Heart left ventricle (tissue), 16 donors: ENCODE measurements at regions of chr16 and their contacts with region 1.

Region 1: DNA sequence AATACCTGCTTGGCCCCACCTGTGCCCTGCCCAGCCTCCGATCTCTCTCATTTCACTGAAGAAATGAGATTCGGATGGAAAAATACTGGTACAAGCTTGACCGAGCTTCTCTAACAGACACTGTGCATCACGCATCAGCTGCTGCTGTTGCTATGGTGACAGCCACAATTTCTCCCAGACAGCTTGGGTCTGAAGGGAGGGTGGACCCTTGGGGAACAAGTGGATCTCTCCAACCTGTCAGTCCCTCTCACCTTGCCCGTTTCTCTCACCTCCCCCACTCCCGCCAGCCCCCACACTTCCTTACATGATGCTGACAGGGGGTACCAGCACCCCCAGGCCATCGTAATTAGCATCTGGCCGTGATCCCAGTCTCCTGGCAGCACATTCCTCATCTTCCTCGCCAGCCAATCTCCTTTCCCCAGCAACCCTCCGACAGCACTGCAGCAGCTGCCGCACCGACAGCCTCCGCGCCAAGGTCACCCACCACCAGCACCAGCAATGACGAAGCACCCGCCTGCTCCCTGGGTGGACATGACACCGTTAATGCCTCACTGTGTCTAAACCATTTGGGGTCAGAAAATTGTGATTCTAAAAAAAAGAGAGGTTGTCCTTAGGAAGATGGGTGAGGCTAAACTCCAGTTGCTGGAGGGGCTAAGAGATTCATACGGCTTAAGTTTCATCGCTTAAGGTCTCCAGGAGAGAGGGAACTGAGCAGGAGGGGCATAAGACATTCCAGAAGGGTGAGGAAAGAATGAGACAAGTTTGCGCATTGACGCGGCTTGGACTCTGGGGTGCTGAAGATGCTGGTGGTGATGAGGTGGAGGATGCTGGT is 58.6 kb upstream of the TNRC6A start:
- DNase-seq: peak; percentile 58 to 85 (median 77)
- ATAC-seq: peak; percentile 74 to 80 (median 76)
- H3K4me3 ChIP-seq: peak overlapping the region in 2 of 12 donors; percentile 1 to 20
- H3K27ac ChIP-seq: peak overlapping the region in 9 of 12 donors; percentile 20 to 88 (median 46)
- H3K4me1 ChIP-seq: peaks cover 0 to 20% (median 5%) of the 10 kb centered on the region in 12 donors
- H3K27me3 ChIP-seq: peaks cover 0 to 7% (median 0%) of the 10 kb centered on the region in 9 donors
- CTCF ChIP-seq: no peak
- POLR2A ChIP-seq: no peak

Region 2: GRCh38 chr16:24537474-24538337 is 133.1 kb before region 1 on chr16:
- intact Hi-C with region 1: no loop called
- DNase-seq: no peak
- ATAC-seq: no peak
- H3K4me3 ChIP-seq: no peak overlapping the region
- H3K27ac ChIP-seq: no peak overlapping the region
- H3K4me1 ChIP-seq: peaks cover 0 to 19% (median 12%) of the 10 kb centered on the region in 12 donors
- H3K27me3 ChIP-seq: no peaks in the 10 kb centered on the region
- CTCF ChIP-seq: no peak
- POLR2A ChIP-seq: no peak

Region 3: DNA sequence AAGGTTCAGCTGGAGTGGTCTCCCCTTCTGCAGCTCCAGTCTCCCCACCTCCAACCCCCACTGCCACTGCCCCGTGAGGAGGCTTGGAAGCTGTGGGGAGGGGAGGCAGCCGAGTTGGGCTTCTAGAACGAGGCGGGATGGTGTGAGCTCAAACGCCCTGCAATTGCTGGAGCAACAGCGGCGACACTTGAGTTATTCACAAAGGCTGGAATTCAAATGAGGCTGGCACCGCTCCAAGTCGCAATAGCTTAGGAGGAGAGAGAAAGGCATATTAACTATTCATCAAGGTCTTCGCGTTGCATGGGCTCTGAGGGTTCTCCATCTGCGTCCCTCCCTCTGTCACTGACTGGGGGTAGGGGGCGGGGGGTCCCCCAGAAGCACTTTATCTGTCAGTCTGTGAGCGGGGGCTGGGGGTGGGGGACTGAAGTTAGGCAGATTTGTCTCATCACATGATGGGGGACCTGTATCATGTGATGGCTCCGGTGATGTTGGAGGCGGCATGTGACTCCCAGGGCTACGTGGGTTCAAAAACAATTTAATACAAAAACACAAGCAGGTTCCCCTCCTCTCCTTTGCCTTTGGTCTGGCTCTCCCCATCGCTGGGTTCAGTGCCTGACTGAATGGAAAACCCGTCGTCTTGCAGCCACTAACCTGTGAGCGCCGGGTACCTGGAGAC is 61.0 kb before region 1 on chr16:
- intact Hi-C with region 1: loop called in 1 of 10 experiments (anchors 10 kb)
- DNase-seq: peak; percentile 19 to 66 (median 33)
- ATAC-seq: peak; percentile 26 to 36 (median 28)
- H3K4me3 ChIP-seq: peak overlapping the region in 9 of 12 donors; percentile 6 to 52 (median 39)
- H3K27ac ChIP-seq: no peak overlapping the region
- H3K4me1 ChIP-seq: peaks cover 0 to 12% (median 8%) of the 10 kb centered on the region in 12 donors
- H3K27me3 ChIP-seq: peaks cover 0 to 27% (median 4%) of the 10 kb centered on the region in 9 donors
- CTCF ChIP-seq: no peak
- POLR2A ChIP-seq: no peak